ENCODE measurements at regions of chr2 and their contacts with region 1.

Region 1: DNA sequence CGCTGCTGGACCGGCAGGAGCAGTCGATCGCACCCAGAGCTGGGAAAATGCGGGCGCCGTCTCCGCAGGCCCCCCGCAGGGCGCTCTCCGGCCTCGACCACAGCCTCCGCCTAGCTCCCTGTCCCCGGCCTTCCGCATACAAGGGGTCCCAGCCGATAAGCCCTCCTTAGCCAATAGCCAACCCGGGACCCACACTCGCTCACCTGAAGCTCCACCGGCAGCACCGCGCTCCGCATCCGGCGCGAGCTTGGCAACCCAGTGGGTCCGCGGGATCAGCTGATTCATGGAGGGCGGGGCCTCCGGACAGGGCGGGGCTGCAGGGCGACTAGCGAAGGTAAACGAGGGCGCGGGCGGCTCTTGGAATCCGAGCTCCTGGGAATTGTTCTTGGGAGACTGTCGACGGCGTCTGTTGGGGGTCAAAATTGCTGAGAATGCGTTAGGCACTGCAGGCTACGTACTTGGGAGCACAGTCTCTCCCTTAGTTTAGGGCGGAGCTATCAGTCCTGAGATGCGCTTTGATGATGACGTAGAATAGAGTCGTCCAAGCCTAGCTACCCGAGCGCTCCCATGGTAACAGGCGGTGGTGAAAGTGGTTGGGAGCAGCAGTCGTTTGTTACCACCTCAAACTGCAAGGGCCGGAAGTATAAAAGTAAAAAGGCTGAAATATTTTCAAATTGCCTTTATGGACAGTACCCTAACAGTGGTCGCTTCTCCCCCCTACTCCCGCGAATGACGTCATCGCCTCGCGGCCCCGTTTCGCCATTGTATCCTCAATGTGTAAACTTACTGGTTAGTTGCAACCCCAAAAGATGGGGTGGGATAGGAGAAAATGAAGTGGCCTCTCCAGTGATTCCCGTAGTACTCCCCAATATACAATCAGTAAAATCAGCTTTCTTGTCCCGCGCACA is at the start of gene ALS2:
- DNase-seq: peak; percentile 97
- ATAC-seq: peak; percentile 92
- H3K4me3 ChIP-seq: peak within 1 kb of the TSS; percentile 80 to 99 (median 88)
- H3K4me3 Mint-ChIP-seq: peak within 1 kb of the TSS; percentile 98
- H3K27ac ChIP-seq: peak within 1 kb of the TSS; percentile 77 to 84
- H3K27ac Mint-ChIP-seq: peak within 1 kb of the TSS; percentile 94
- H3K4me1 ChIP-seq: peaks cover 13 to 15% of the 10 kb centered on the region in 2 donors
- H3K4me1 Mint-ChIP-seq: peaks cover 16% of the 10 kb centered on the region
- H3K27me3 ChIP-seq: peaks cover 0 to 12% (median 0%) of the 10 kb centered on the region in 4 experiments
- H3K27me3 Mint-ChIP-seq: peaks cover 10% of the 10 kb centered on the region
- CTCF ChIP-seq: no peak
- total RNA-seq, gene ALS2: 15.8 and 16.7 TPM in 2 replicates

Region 2: GRCh38 chr2:199911052-199911876 is 1869.7 kb before region 1 on chr2 and contains the start of gene C2orf69:
- CTCF ChIA-PET with region 1: no interaction called
- POLR2A ChIA-PET with region 1: no interaction called
- intact Hi-C with region 1: loop called (anchors 5 kb)
- DNase-seq: peak; percentile 96
- ATAC-seq: peak; percentile 86
- H3K4me3 ChIP-seq: peak within 1 kb of the TSS; percentile 71 to 98 (median 87)
- H3K4me3 Mint-ChIP-seq: peak within 1 kb of the TSS; percentile 89
- H3K27ac ChIP-seq: peak within 1 kb of the TSS; percentile 97 to 98
- H3K27ac Mint-ChIP-seq: peak within 1 kb of the TSS; percentile 87
- H3K4me1 ChIP-seq: peaks cover 12 to 26% of the 10 kb centered on the region in 2 donors
- H3K4me1 Mint-ChIP-seq: peaks cover 43% of the 10 kb centered on the region
- H3K27me3 ChIP-seq: no peaks in the 10 kb centered on the region
- H3K27me3 Mint-ChIP-seq: no peaks in the 10 kb centered on the region
- CTCF ChIP-seq: no peak
- total RNA-seq, gene C2orf69: 12.8 and 12.9 TPM in 2 replicates

Region 3: GRCh38 chr2:200713003-200713703 is 1067.8 kb before region 1 on chr2:
- CTCF ChIA-PET with region 1: no interaction called
- POLR2A ChIA-PET with region 1: no interaction called
- intact Hi-C with region 1: loop called (anchors 2 kb)
- DNase-seq: peak; percentile 91
- ATAC-seq: peak; percentile 99
- H3K4me3 ChIP-seq: peak overlapping the region in 4 of 5 experiments; percentile 5 to 52 (median 16)
- H3K4me3 Mint-ChIP-seq: peak overlapping the region; percentile 83
- H3K27ac ChIP-seq: peak overlapping the region; percentile 82 to 93
- H3K27ac Mint-ChIP-seq: peak overlapping the region; percentile 98
- H3K4me1 ChIP-seq: peaks cover 5 to 6% of the 10 kb centered on the region in 2 donors
- H3K4me1 Mint-ChIP-seq: peaks cover 15% of the 10 kb centered on the region
- H3K27me3 ChIP-seq: no peaks in the 10 kb centered on the region
- H3K27me3 Mint-ChIP-seq: peaks cover 10% of the 10 kb centered on the region
- CTCF ChIP-seq: peak; percentile 83

Region 4: DNA sequence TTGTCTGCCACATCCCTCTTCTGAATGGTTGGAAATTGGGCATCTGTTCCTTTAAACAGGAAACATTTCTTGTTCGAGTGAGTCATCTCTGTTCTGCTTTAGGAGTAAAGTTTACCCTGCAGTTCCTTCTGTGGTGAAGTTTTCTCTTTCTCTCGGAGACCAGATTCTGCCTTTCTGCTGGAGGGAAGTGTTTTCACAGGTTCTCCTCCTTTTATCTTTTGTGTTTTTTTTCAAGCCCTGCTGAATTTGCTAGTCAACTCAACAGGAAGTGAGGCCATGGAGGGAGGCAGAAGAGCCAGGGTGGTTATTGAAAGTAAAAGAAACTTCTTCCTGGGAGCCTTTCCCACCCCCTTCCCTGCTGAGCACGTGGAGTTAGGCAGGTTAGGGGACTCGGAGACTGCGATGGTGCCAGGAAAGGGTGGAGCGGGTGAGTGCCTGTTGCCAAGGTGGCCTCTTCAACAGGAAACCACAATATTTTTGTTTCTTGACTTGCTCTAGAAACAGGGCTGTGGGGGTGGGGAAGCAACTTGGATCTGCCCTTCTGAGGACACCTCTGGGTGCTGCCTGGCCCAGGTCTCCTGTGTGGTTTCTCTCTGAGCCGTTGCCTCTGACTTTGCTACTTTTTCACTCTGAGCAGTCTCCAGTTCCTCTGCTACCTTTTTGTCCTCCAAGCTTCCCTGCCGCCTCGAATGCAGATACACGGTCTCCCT is 522.8 kb before region 1 on chr2:
- CTCF ChIA-PET with region 1: no interaction called
- POLR2A ChIA-PET with region 1: no interaction called
- intact Hi-C with region 1: loop called (anchors 5 kb)
- DNase-seq: peak; percentile 94
- ATAC-seq: peak; percentile 67
- H3K4me3 ChIP-seq: peak overlapping the region; percentile 39 to 90 (median 58)
- H3K4me3 Mint-ChIP-seq: peak overlapping the region; percentile 87
- H3K27ac ChIP-seq: peak overlapping the region; percentile 97 to 98
- H3K27ac Mint-ChIP-seq: peak overlapping the region; percentile 99
- H3K4me1 ChIP-seq: peaks cover 58 to 84% of the 10 kb centered on the region in 2 donors
- H3K4me1 Mint-ChIP-seq: peaks cover 73% of the 10 kb centered on the region
- H3K27me3 ChIP-seq: no peaks in the 10 kb centered on the region
- H3K27me3 Mint-ChIP-seq: no peaks in the 10 kb centered on the region
- CTCF ChIP-seq: no peak

Region 5: DNA sequence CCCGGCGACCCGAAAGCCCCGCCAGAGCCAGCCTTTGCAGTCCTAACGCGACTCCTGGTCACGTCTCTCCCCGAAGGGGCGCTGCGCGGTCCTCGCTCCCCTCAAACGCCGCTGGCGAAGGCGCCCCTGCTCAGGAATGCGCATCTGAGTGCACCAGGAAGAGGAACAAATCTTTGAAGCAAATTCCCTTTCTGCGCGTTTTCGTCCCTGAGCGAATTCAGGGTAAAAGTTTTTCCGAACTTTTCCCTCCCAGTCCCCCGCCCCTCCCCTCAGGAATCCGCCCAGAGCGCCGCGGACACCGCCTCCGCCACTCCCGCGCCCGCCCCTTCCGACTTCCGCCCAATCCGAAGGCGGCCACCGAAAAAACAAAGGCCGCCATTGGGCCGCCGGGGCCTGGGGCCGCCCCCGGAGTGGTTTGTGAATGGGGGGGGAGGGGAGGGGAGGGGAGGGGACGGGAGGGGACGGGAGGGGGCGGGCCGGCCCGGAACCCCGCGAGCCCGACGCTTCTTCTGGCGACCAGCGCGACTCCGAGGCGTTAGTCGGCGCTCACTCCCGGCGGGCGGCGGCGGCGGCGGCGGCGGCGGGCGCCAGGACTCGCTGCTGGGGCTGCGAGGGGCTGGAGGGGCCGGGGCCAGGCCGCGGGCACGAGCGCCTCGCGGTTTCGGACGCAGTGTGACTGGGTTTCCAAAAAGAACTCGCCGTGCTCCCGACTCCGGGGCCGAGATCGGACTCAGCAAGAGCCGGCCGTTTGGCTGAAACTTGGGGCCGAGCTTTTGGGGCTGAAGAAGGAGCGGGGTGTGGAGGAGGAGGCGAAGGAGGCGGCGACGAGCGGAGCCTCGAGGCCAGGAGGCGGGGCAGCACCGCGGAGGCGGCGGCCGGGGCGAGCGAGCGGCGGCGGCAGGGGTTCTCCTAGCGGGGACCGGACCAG is 252.7 kb after region 1 on chr2 and contains the start of gene FZD7:
- CTCF ChIA-PET with region 1: no interaction called
- POLR2A ChIA-PET with region 1: no interaction called
- intact Hi-C with region 1: loop called (anchors 1 kb)
- DNase-seq: peak; percentile 90
- ATAC-seq: peak; percentile 85
- H3K4me3 ChIP-seq: peak within 1 kb of the TSS; percentile 63 to 89 (median 75)
- H3K4me3 Mint-ChIP-seq: peak within 1 kb of the TSS; percentile 91
- H3K27ac ChIP-seq: no peak within 1 kb of the TSS
- H3K27ac Mint-ChIP-seq: peak within 1 kb of the TSS; percentile 78
- H3K4me1 ChIP-seq: peaks cover 20 to 25% of the 10 kb centered on the region in 2 donors
- H3K4me1 Mint-ChIP-seq: peaks cover 13% of the 10 kb centered on the region
- H3K27me3 ChIP-seq: peaks cover 0 to 43% (median 32%) of the 10 kb centered on the region in 4 experiments
- H3K27me3 Mint-ChIP-seq: peaks cover 22% of the 10 kb centered on the region
- CTCF ChIP-seq: no peak
- total RNA-seq, gene FZD7: 2.1 TPM in 2 replicates

Region 6: GRCh38 chr2:202265467-202266277 is 484.7 kb after region 1 on chr2 and contains the start of gene NOP58:
- CTCF ChIA-PET with region 1: no interaction called
- POLR2A ChIA-PET with region 1: no interaction called
- intact Hi-C with region 1: loop called (anchors 10 kb)
- DNase-seq: peak; percentile 95
- ATAC-seq: peak; percentile 86
- H3K4me3 ChIP-seq: peak within 1 kb of the TSS; percentile 70 to 100 (median 97)
- H3K4me3 Mint-ChIP-seq: peak within 1 kb of the TSS; percentile 57
- H3K27ac ChIP-seq: peak within 1 kb of the TSS; percentile 81 to 93
- H3K27ac Mint-ChIP-seq: peak within 1 kb of the TSS; percentile 71
- H3K4me1 ChIP-seq: peaks cover 25 to 42% of the 10 kb centered on the region in 2 donors
- H3K4me1 Mint-ChIP-seq: peaks cover 19% of the 10 kb centered on the region
- H3K27me3 ChIP-seq: no peaks in the 10 kb centered on the region
- H3K27me3 Mint-ChIP-seq: no peaks in the 10 kb centered on the region
- CTCF ChIP-seq: no peak
- total RNA-seq, gene NOP58: 136 and 138 TPM in 2 replicates